OCI-LY7 (cell line): ENCODE measurements at regions of chr19 and their contacts with region 1.

Region 1: DNA sequence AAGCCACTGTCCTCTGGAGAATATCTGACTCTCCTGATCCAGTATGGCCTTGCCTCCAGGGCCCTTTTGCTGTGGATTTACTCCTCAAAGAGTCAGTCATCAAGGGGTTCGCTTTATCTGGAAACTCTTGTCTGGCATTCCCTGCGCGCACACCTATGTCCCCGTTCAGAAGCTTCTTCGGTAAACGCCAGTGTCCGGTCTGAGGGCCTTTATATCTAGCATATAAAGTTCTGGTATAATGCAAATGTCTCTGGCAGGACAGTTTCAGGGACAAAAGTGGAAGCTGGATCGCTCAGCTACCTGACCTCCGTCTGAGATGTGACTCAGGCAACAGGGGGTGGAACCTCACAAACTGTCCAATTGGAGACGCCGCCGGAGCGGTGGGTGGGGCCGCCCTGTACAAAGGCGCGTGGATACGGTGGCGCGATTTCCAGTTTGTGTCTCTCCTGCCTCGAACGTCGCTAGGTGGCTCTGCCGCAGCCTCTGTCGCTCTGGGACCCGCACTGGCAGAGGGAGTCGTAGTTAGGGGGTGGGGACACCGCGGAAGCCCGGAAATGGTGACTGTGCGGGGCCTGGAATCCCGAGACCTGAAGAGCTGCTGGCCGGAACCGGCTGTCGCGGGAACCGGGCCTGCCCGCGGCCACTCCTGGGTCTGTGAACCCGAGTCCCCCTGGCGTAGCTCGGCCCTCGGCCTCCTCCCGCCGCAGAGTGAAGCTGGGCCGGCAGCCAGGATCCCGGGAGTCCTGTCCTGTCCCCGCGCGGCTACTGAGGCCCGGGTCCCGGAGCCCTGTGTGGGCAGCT is 10.6 kb upstream of the ZNF709 start:
- DNase-seq: peak; percentile 96
- H3K4me3 ChIP-seq: peak overlapping the region; percentile 70
- H3K27ac ChIP-seq: peak overlapping the region; percentile 38
- H3K4me1 ChIP-seq: peaks cover 13% of the 10 kb centered on the region
- CTCF ChIP-seq: peak; percentile 80

Region 2: DNA sequence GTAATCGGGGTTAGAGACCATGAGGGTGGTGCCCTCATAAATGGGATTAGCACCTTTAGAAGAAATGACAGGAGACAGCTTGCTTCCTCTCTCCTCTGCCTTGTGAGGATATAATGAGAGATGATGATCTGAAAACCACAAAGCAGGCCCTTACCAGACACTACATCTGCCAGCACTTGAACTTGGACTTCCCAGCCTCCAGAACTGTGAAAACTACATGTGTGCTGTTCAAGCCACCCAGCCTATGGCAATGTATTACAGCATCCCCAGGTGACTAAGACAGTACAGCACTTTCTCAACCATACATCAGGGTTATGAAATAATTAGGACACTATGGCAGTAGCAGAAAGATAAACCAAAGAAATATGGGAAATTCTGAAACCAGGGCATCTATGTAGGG is 48.7 kb after region 1 on chr19:
- CTCF ChIA-PET with region 1: no interaction called
- POLR2A ChIA-PET with region 1: interaction called, 10 read pairs
- intact Hi-C with region 1: no loop called
- DNase-seq: no peak
- H3K4me3 ChIP-seq: no peak overlapping the region
- H3K27ac ChIP-seq: no peak overlapping the region
- H3K4me1 ChIP-seq: no peaks in the 10 kb centered on the region
- CTCF ChIP-seq: no peak

Region 3: DNA sequence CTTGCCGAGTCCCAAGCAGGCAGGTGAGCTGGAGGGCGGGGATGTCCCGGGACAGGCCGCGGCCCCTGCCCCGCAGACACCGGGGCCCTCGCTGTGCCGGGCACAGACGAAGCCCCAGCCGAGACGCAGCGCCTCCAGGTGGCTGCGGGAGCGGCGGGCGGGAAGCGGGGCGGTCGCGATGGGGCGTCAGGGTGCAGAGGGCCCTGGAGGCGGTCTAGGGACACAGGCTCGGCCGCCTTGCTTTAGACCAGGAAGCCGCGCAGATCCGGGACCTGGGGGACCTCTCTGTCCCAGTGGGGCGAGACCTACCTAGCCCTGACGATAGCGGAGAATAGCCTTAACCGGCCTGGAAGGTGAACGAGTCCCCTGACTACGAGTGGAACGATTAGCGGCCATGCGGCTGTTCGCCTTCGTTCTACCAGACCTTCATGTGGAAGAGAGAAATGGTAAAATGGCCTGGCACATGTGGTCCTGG is 60.3 kb after region 1 on chr19:
- CTCF ChIA-PET with region 1: no interaction called
- POLR2A ChIA-PET with region 1: no interaction called
- intact Hi-C with region 1: no loop called
- DNase-seq: no peak
- H3K4me3 ChIP-seq: no peak overlapping the region
- H3K27ac ChIP-seq: no peak overlapping the region
- H3K4me1 ChIP-seq: peaks cover 11% of the 10 kb centered on the region
- CTCF ChIP-seq: no peak